AG04449 (cell line): ENCODE measurements at regions of chr2 and their contacts with region 1.

Region 1: DNA sequence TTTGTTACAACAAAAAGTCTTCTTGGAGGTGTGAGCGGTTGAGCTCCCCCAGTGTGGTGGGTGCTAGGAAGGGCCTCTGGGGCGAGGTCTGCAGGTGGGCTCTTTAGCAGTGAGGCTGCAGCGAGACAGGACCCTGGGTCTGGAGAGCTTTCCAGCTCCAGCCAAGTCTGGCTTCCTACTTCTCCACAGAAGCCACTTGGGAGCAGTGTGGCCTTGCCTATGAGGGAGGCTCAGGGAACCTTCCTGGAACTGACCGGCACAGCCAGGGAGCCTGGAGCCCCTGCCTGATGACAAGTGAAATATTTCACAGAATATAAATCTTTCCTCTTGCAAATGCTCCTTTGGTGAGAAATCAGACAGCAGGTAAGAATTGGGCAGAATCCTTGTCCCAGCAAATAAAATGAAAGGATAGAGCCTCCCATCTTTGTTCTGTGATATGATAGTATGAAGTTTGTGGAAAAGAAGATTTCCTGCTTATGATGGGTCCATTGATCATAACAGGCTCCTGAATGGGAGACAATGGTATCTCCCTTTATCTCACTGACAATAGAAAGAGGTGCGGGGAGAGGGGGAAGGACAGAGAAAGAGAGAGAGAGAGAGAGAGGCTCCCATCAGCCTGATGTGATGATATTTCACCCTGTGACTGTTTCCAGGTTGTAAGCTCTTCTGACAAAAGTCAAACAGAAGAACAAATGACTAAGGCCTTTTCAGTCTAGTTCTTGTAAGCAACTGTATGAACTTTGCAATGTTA is 289.8 kb upstream of the SPRED2 start:
- DNase-seq: no peak
- H3K4me3 ChIP-seq: no peak overlapping the region
- CTCF ChIP-seq: peak; percentile 4

Region 2: DNA sequence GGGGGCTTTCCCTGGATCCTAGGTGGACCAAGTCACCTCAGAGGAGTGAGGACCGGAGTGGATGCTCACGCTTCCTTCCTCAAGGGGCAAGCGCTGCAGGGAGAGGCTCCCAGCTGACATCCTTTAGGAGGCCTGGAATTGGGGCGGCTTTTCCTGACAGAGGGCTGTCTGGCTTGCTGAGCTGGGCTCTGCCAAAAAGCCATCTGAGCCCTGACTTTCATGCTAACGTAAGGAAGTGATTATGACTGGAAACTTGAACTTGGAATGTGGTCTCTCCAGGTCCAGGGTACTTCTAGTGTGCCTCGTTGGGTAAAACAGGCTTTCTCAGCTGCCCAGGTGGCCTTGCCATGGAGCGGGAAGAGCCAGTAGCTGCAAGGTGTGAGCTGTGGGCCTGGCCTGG is 21.5 kb before region 1 on chr2:
- CTCF ChIA-PET with region 1: no interaction called
- POLR2A ChIA-PET with region 1: no interaction called
- DNase-seq: no peak
- H3K4me3 ChIP-seq: no peak overlapping the region
- CTCF ChIP-seq: no peak

Region 3: GRCh38 chr2:65800998-65801397 is 78.8 kb after region 1 on chr2:
- CTCF ChIA-PET with region 1: interaction called, 15 read pairs
- POLR2A ChIA-PET with region 1: no interaction called
- DNase-seq: no peak
- H3K4me3 ChIP-seq: no peak overlapping the region
- CTCF ChIP-seq: peak; percentile 50

Region 4: GRCh38 chr2:66164470-66164869 is 442.3 kb after region 1 on chr2:
- CTCF ChIA-PET with region 1: no interaction called
- POLR2A ChIA-PET with region 1: no interaction called
- DNase-seq: no peak
- H3K4me3 ChIP-seq: no peak overlapping the region
- CTCF ChIP-seq: no peak